AG04449 (cell line): ENCODE measurements at regions of chr5 and their contacts with region 1.

Region 1: DNA sequence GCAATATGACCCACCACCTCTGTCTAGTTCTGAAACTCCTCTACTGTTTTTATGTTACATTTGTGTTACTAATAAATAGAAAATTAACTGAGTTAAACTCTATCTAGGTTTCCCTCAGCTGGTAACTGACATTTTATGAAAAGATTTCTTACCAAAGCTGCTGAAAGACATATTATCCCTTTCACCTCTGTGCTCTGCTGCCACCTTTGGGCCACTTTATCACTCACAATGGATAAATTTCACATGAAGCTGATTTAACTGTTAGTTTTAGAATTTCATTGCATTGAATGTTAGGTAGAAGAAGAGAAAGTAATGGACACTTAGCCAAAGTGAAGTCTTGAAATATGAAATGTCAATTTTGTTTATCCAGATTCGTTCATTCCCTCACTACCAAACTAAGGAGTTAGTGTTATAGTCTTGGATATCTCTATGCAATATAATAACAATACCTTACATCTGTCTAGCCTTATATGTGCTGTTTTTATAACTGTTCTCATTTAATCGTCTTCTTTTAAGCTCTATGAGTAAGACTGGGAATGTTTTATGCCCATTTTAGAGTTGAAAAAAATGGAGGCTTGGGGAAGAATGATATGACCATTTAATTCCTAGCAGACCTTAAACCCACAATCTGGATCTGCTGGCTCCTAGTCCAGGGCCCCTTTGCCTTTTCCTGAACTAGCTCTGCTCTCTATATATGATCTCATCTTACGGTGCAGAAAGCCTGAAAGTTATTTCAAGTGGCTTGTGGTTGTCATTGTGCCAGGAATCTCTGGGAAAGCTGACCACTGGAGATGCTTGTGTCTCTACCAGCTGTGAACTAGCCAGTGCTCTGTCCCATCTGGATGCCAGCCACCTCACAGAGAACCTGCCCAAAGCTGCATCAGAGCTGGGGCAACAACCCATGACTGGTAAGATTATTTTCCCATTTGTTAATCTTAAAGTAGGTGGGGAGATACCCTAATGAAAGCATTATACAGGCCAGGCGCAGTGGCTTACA is 97.1 kb downstream of the GOLPH3 start:
- DNase-seq: no peak
- H3K4me3 ChIP-seq: no peak overlapping the region
- CTCF ChIP-seq: peak; percentile 56

Region 2: DNA sequence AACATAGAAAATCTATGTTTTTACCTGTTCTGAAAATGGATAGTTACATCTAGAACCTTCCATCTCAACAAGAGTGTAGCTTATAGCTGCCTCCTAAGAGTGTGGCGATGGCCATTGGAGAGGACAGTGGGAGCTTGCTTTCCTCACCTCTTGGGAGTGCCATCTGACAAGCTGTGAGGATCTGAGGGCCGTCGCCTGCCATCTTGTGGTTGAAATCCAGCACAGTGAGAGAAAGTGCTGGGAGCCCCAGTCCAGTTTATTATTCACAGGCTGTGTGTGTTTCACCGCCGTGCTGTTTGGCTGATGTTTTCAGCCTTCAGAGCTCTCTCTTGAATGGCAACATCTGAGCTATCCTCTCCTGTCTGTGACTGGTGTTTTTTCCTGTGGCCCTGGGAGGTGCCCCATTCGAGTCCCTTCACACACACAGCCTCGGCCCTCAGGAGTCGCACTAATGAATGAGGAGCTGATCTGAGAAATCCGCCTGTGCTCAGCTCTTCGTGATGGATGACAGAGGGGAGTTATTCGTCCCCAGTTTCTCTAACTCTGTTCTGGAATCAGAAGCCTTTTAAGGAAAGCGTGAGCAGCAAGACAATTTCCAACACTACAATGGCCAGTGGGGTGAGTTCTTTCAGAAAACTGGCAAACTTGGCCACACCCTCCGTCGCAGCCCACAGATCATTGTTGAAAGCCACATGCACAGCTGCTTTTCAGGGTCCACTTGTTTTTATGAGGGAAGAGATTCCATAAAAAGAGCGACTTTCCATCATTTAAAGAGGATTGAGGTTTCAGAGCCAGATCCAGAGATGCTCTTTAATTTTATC is 267.7 kb before region 1 on chr5:
- CTCF ChIA-PET with region 1: interaction called, 12 read pairs
- POLR2A ChIA-PET with region 1: no interaction called
- DNase-seq: peak; percentile 5
- H3K4me3 ChIP-seq: no peak overlapping the region
- CTCF ChIP-seq: peak; percentile 77

Region 3: GRCh38 chr5:31825518-31826068 is 251.4 kb before region 1 on chr5:
- CTCF ChIA-PET with region 1: interaction called, 195 read pairs
- POLR2A ChIA-PET with region 1: no interaction called
- DNase-seq: peak; percentile 7
- H3K4me3 ChIP-seq: no peak overlapping the region
- CTCF ChIP-seq: peak; percentile 38

Region 4: GRCh38 chr5:31934156-31934555 is 142.8 kb before region 1 on chr5:
- CTCF ChIA-PET with region 1: interaction called, 10 read pairs
- POLR2A ChIA-PET with region 1: no interaction called
- DNase-seq: no peak
- H3K4me3 ChIP-seq: no peak overlapping the region
- CTCF ChIP-seq: no peak

Region 5: DNA sequence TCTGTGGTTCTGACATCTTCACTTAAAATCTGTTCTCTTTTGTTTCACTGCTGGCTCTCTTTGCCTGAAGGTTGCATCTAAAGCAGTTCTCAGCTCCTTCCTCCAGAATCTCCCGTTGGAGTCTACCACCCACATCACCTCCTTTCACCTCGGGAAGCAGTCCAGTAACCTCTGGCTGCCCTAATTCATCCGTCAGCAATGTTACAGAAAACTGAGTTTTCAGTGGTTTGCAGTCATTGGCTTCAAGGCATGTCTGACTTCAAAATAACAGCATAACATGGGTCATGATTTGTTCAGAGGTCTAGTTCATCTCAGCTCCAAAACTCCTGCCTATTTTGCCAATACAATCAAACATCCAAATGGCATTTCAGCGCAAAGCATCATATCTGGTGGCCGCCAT is 10.5 kb before region 1 on chr5:
- CTCF ChIA-PET with region 1: interaction called, 32 read pairs
- POLR2A ChIA-PET with region 1: no interaction called
- DNase-seq: no peak
- H3K4me3 ChIP-seq: no peak overlapping the region
- CTCF ChIP-seq: no peak